PC-9 (cell line): ENCODE measurements at regions of chr13 and their contacts with region 1.

Region 1: DNA sequence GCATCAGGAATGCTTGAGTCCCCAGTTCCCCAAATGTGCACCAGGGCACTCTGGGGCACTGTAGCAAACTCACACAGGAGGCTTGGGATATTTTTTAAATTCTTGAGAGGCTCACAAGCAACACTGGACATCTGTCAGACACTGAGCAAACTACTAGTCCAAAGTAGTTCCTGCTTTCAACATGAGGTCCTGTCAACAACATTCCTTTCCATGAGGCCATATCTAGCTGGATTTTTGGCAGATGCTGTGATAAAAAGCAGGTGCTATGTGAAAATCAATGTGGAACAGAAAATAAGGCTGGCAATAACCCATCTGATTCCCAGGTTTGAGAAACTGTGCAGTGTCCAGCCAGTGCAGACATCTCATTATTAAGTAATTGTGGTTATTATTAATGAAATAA is 50.5 kb downstream of the STARD13 start:
- DNase-seq: peak in 1 of 2 experiments; percentile 61
- H3K4me3 ChIP-seq: no peak overlapping the region
- H3K27ac ChIP-seq: no peak overlapping the region
- H3K4me1 ChIP-seq: peaks cover 22% of the 10 kb centered on the region
- H3K27me3 ChIP-seq: no peaks in the 10 kb centered on the region
- CTCF ChIP-seq: no peak

Region 2: GRCh38 chr13:33279414-33280273 is 44.6 kb after region 1 on chr13:
- CTCF ChIA-PET with region 1: no interaction called
- POLR2A ChIA-PET with region 1: no interaction called
- intact Hi-C with region 1: loop called (anchors 1 kb)
- DNase-seq: peak; percentile 63 to 96
- H3K4me3 ChIP-seq: peak overlapping the region; percentile 28; the same call in 1 of the 2 replicates
- H3K27ac ChIP-seq: peak overlapping the region; percentile 93
- H3K4me1 ChIP-seq: peaks cover 63% of the 10 kb centered on the region
- H3K27me3 ChIP-seq: no peaks in the 10 kb centered on the region
- CTCF ChIP-seq: no peak

Region 3: DNA sequence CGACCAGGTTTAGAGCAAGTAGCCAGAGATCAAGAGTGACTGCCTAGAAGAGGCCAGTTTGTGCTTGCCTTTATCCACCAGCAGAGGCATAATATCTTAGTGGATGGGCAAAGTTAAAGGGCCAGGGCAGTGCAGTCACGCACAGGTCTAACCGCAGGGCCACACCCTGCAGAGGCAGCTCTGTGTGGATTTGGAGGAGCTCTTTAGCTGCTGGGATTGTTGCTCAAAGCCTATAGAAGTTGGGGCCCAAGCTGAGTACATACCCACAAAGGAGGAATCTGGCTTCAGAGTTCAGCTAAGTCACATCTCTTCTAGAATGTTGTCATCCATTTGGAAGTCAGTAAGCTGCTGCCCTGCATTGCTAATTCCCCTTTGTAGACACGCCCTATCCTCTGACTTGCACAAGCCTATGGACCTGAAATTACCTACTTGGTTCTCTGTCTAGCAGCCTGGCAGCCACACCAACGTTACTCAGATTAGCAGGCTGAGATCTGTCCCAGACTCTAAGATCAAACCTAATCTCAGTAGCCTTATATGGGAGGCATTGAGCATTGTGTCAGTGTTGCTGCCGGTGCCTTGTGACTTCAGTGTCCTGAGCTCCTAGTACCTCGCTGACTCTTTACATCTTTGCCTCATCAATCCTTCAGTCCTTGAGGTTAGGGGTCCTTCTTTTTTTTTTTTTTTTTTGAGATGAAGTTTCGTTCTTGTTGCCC is 153.4 kb after region 1 on chr13:
- CTCF ChIA-PET with region 1: no interaction called
- POLR2A ChIA-PET with region 1: no interaction called
- intact Hi-C with region 1: no loop called
- DNase-seq: peak; percentile 31 to 49
- H3K4me3 ChIP-seq: no peak overlapping the region
- H3K27ac ChIP-seq: no peak overlapping the region
- H3K4me1 ChIP-seq: no peaks in the 10 kb centered on the region
- H3K27me3 ChIP-seq: no peaks in the 10 kb centered on the region
- CTCF ChIP-seq: no peak